Tibial artery (tissue), 4 donors: ENCODE measurements at regions of chr1 and their contacts with region 1.

Region 1: DNA sequence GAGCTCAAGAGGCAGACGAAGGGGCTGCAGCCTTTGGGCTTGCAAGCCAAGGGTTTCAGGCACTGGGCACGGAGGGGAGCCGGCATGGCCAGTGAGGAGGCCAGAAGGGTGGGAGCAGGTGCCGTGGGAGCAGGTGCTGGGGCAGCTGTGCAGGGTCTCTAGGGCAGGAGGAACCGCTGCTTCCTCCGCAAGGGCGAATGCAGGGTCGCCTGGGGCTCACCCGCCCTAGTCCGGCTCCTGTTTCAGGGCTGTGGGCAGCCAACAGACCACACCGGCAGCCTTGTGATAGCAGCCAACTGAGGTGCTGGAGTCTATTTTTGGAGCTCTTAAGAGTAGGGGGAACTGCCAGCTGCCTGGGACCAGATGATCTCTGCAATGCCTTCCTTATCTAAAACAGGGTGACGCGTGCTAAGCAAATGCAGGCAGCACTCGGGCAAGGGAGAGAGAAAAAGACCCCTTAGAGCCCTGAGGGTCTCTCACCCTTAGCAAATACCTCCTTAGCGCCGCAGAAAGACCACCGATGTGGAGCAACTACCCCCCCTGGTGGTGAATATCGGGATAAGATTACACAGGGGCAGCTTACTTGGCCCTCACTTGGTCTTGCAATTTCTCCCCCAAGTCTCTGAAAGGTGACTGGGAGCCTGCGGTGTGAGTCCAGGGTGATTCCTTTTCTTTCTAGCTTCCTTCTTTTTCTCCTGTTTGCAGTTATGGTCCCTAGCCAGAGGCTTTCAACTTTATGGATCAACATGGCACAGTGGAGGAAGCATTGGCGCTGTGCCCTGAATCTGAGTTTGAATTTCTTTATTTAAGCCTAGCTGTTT is 20.7 kb upstream of the MAPKAPK2 start:
- DNase-seq: peak in 1 of 2 donors; percentile 46
- H3K4me3 ChIP-seq: peak overlapping the region in 1 of 2 donors; percentile 12
- H3K27ac ChIP-seq: no peak overlapping the region
- H3K4me1 ChIP-seq: peaks cover 4 to 22% (median 15%) of the 10 kb centered on the region in 4 donors
- H3K27me3 ChIP-seq: no peaks in the 10 kb centered on the region
- CTCF ChIP-seq: peak; percentile 79 to 88

Region 2: DNA sequence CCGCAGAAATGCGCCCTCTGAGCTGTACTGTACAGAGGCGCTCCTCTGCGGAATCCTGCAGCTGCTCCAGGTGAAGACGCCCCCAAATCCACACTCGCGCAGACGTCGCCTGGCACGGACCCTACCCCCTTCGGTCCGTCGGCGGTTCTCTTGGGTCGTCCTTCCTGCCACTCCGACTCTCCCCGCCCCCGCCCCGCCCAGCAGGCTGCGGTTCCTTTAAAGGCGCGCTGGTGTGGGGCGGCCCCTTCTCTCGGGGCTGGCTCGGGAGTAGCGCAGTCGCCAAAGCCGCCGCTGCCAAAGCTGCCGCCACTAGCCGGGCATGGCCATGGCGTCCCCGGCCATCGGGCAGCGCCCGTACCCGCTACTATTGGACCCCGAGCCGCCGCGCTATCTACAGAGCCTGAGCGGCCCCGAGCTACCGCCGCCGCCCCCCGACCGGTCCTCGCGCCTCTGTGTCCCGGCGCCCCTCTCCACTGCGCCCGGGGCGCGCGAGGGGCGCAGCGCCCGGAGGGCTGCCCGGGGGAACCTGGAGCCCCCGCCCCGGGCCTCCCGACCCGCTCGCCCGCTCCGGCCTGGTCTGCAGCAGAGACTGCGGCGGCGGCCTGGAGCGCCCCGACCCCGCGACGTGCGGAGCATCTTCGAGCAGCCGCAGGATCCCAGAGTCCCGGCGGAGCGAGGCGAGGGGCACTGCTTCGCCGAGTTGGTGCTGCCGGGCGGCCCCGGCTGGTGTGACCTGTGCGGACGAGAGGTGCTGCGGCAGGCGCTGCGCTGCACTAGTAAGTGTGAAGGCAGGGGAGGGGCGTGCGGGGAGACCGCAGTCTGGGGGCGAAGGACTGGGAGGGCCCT is 156.5 kb before region 1 on chr1 and contains the start of gene RASSF5:
- intact Hi-C with region 1: loop called (anchors 10 kb)
- DNase-seq: peak; percentile 83 to 94
- H3K4me3 ChIP-seq: peak within 1 kb of the TSS; percentile 73 to 88
- H3K27ac ChIP-seq: peak within 1 kb of the TSS; percentile 76 to 82
- H3K4me1 ChIP-seq: peaks cover 0 to 71% (median 46%) of the 10 kb centered on the region in 4 donors
- H3K27me3 ChIP-seq: no peaks in the 10 kb centered on the region
- CTCF ChIP-seq: no peak

Region 3: GRCh38 chr1:206606856-206607255 is 57.2 kb before region 1 on chr1:
- intact Hi-C with region 1: no loop called
- DNase-seq: no peak
- H3K4me3 ChIP-seq: no peak overlapping the region
- H3K27ac ChIP-seq: no peak overlapping the region
- H3K4me1 ChIP-seq: peaks cover 0 to 14% (median 9%) of the 10 kb centered on the region in 4 donors
- H3K27me3 ChIP-seq: no peaks in the 10 kb centered on the region
- CTCF ChIP-seq: no peak

Region 4: DNA sequence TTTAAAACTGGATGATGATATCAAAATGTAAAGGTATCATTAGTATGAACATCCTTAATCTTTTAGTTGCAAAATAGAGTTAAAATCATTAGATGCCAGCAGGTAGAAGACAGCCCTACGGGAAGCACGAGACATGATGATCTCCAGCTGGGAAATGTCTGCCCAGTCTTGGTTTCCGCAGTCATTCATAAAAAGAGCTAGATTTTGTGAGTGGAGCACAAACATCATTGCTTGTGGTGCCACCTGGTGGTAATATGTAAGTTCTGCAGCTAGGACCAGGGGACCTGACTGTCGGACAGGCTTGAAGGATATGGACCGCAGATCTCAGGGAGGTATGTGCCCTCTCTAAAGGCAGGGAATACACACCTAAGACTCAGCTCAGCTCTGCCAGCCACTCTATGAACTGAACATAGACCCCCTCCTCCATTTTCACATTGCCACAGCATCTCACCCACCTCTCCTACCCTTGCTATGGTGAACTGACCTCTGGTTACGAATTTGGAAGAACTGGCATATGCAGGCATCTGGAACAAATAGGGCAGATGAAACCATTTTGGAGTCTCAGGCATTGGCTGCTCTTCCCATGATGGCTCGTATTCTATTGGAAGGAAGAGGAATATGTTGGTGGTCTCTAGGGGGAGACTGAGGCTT is 248.5 kb after region 1 on chr1:
- intact Hi-C with region 1: loop called (anchors 10 kb)
- DNase-seq: peak; percentile 74 to 75
- H3K4me3 ChIP-seq: no peak overlapping the region
- H3K27ac ChIP-seq: no peak overlapping the region
- H3K4me1 ChIP-seq: peaks cover 0 to 14% (median 12%) of the 10 kb centered on the region in 4 donors
- H3K27me3 ChIP-seq: peaks cover 0 to 45% of the 10 kb centered on the region in 2 donors
- CTCF ChIP-seq: peak; percentile 82 to 84